ENCODE measurements at regions of chr10 and their contacts with region 1.

Region 1: GRCh38 chr10:78134773-78135305 is 101.2 kb downstream of the RPS24 start:
- DNase-seq: no peak
- ATAC-seq: no peak
- H3K4me3 Mint-ChIP-seq: no peak overlapping the region
- H3K27ac Mint-ChIP-seq: no peak overlapping the region
- H3K4me1 Mint-ChIP-seq: no peaks in the 10 kb centered on the region
- H3K27me3 Mint-ChIP-seq: peaks cover 7% of the 10 kb centered on the region

Region 2: GRCh38 chr10:77478247-77478961 is 656.4 kb before region 1 on chr10:
- CTCF ChIA-PET with region 1: no interaction called
- POLR2A ChIA-PET with region 1: no interaction called
- intact Hi-C with region 1: no loop called
- DNase-seq: no peak
- ATAC-seq: no peak
- H3K4me3 Mint-ChIP-seq: no peak overlapping the region
- H3K27ac Mint-ChIP-seq: no peak overlapping the region
- H3K4me1 Mint-ChIP-seq: no peaks in the 10 kb centered on the region
- H3K27me3 Mint-ChIP-seq: no peaks in the 10 kb centered on the region

Region 3: DNA sequence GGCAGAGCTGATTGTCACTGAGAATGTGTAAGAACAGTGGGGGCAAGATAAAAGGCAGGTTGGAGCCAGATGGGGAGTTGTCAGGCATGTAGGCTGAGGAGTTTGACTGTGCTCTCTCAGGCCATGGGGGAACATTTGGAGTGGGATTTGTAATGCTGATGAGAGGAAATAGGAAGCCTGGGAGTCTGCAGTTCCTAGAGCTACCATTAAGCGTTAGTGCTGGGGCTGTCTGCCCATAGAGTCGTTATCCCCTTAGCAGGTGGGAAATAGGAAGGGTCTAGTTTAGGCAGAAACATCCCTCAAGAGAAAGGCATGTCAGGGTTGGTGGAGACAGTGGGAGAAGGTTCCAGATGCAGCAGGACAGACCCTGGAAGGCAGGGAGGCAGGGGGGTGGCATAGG is 25.6 kb before region 1 on chr10:
- CTCF ChIA-PET with region 1: no interaction called
- POLR2A ChIA-PET with region 1: interaction called, 13 read pairs
- intact Hi-C with region 1: no loop called
- DNase-seq: no peak
- ATAC-seq: no peak
- H3K4me3 Mint-ChIP-seq: no peak overlapping the region
- H3K27ac Mint-ChIP-seq: no peak overlapping the region
- H3K4me1 Mint-ChIP-seq: no peaks in the 10 kb centered on the region
- H3K27me3 Mint-ChIP-seq: peaks cover 4% of the 10 kb centered on the region

Measured in activated CD4-positive, alpha-beta T cell treated with anti-CD3 and anti-CD28 coated beads for 36 hours (primary cell).